MCF 10A (cell line): ENCODE measurements at regions of chr13 and their contacts with region 1.

Region 1: GRCh38 chr13:26482451-26483197 is 74.9 kb upstream of the WASF3 start:
- DNase-seq: peak; percentile 84
- H3K4me3 Mint-ChIP-seq: peak overlapping the region; percentile 30
- H3K27ac Mint-ChIP-seq: no peak overlapping the region
- H3K4me1 Mint-ChIP-seq: no peaks in the 10 kb centered on the region
- H3K27me3 Mint-ChIP-seq: no peaks in the 10 kb centered on the region
- CTCF ChIP-seq: peak; percentile 74

Region 2: DNA sequence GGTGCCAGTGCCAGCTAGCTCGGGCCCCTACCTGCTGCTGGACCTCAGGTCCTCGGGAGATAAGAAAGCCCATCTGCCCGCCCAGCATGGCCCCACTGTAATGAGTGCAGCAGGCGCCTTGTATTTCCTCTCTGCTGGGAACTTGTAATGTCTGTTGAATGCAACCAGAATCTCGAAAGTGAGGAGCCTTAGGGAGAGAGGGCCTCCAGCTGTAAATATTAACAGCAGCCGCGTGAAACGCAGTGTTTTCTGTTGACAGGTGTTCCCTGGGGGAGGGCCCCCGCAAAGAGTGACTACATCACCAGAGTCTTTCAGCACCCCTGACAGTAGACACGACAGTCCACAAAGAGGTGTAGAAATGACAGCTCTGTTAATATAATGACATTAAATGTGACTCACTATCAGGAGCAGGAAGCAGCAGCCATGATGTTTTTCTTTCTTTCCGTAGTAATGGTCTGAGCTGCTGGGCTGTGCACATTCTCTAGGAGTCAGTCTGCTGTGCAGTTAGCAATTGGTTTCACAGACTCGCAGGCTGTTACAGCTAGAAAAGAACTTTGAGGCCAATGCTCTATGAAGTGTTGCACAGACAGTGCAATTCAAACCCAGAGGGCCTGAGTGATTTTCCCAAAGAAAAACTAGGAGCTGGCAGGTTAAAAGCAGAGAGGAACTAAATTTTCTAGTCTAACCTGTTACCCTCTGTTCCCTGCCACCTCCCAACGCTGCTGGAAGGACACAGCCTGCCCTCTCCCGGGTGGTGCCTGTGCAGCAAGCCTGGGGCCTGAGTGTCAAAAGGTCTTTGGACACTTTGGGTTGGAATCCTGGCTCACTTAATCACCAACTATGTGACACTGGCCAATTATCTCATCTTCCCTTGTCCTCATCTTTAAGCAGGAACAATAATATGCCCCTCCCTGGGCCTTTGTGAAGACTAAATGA is 16.3 kb after region 1 on chr13:
- CTCF ChIA-PET with region 1: interaction called, 38 read pairs
- POLR2A ChIA-PET with region 1: no interaction called
- intact Hi-C with region 1: no loop called
- DNase-seq: no peak
- H3K4me3 Mint-ChIP-seq: no peak overlapping the region
- H3K27ac Mint-ChIP-seq: no peak overlapping the region
- H3K4me1 Mint-ChIP-seq: peaks cover 17% of the 10 kb centered on the region
- H3K27me3 Mint-ChIP-seq: no peaks in the 10 kb centered on the region
- CTCF ChIP-seq: no peak

Region 3: DNA sequence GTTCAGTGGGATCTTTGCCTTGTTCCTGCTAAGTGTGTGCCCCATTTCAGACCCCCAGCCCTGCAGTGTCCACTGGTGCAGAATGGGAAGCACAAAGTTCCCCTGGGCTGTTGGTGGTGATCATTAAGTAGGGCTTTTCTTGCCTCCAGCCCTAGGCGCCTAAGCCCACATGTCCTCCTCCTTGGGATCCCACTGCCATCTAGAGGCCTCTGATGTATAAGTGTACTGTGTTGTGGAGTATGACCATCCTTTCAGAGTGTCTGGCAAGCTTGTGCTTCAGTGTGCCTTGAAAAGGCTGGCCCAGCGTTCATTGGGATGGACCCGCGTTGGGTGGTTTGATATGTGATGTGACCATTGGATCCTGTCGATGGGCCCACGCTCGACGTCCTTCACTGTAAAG is 146.1 kb after region 1 on chr13:
- CTCF ChIA-PET with region 1: interaction called, 3 read pairs
- POLR2A ChIA-PET with region 1: no interaction called
- intact Hi-C with region 1: loop called (anchors 1 kb)
- DNase-seq: peak; percentile 24
- H3K4me3 Mint-ChIP-seq: no peak overlapping the region
- H3K27ac Mint-ChIP-seq: no peak overlapping the region
- H3K4me1 Mint-ChIP-seq: no peaks in the 10 kb centered on the region
- H3K27me3 Mint-ChIP-seq: no peaks in the 10 kb centered on the region
- CTCF ChIP-seq: peak; percentile 9